ENCODE measurements at regions of chr11 and their contacts with region 1.

Region 1: GRCh38 chr11:3807909-3808860 is at the start of gene PGAP2:
- DNase-seq: no peak
- H3K4me3 ChIP-seq: peak within 1 kb of the TSS; percentile 81
- H3K27ac ChIP-seq: no peak within 1 kb of the TSS
- H3K27me3 ChIP-seq: no peaks in the 10 kb centered on the region
- CTCF ChIP-seq: peak; percentile 82
- polyA plus RNA-seq, gene PGAP2: 20.8 and 26.3 TPM in 2 replicates

Region 2: DNA sequence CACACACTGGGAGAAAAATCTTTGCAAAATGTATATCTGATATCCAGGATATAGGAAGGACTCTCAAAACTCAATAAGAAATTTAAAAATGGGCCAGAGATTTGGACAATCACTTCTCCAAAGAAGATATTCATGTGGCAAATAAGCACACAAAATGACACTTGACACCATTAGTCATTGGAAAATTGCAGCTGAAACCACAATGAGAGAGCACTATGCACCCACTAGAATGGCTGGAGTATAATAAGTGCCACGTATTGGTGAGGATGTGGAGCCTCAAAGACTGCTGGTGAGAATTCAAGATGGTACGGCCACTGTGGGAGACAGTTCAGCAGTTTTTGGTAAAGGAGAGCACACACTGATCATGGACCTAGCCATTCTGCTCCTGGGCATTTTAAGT is 630.3 kb before region 1 on chr11:
- CTCF ChIA-PET with region 1: no interaction called
- POLR2A ChIA-PET with region 1: no interaction called
- DNase-seq: no peak
- H3K4me3 ChIP-seq: no peak overlapping the region
- H3K27ac ChIP-seq: no peak overlapping the region
- H3K27me3 ChIP-seq: peaks cover 7% of the 10 kb centered on the region
- CTCF ChIP-seq: no peak

Region 3: DNA sequence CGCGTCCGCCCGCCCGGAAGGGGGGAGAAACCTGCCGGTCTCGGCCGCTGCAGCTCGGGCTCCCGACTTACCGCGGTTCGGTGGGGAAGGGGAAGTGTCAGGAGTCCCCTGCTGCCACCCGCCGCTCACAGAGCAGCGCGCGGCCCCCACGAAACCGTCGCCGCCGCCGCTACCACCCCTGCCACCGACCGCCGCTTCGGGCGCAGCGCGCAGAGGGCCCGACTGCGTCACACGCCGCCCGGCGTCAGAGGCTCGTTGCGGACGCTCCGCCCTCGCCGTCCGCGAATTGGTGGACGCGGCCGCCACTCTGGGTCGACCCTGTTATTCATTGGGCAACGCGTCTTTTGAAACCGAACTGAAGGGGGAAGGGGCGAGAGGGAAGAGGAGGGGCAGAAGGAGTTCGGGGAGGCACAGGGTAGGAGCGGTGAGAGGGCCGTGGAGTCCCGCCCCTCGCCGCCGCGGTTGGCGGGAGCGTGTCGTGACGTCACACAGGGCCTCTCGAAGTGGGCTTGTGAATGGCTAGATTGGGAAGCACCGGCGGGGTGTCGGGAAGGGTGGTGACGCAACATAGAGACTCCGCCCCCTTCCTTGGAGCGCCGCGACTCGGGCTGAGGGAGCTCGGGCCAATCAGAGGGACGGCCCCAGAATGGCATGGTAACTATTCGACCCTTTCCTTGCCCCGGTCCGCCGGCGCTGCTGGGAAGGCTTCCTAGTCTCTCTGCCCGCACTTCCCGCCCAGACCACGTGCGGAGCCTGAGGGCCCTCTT is 10.7 kb before region 1 on chr11 and contains the start of gene NUP98:
- CTCF ChIA-PET with region 1: interaction called, 15 read pairs
- POLR2A ChIA-PET with region 1: interaction called, 4 read pairs
- DNase-seq: peak; percentile 100
- H3K4me3 ChIP-seq: peak within 1 kb of the TSS; percentile 98
- H3K27ac ChIP-seq: peak within 1 kb of the TSS; percentile 93
- H3K27me3 ChIP-seq: no peaks in the 10 kb centered on the region
- CTCF ChIP-seq: no peak
- polyA plus RNA-seq, gene NUP98: 90.7 and 101 TPM in 2 replicates

Region 4: GRCh38 chr11:3824714-3825472 is 16.7 kb after region 1 on chr11:
- CTCF ChIA-PET with region 1: interaction called, 11 read pairs
- POLR2A ChIA-PET with region 1: interaction called, 4 read pairs
- DNase-seq: no peak
- H3K4me3 ChIP-seq: no peak overlapping the region
- H3K27ac ChIP-seq: peak overlapping the region; percentile 11
- H3K27me3 ChIP-seq: no peaks in the 10 kb centered on the region
- CTCF ChIP-seq: peak; percentile 53

Region 5: DNA sequence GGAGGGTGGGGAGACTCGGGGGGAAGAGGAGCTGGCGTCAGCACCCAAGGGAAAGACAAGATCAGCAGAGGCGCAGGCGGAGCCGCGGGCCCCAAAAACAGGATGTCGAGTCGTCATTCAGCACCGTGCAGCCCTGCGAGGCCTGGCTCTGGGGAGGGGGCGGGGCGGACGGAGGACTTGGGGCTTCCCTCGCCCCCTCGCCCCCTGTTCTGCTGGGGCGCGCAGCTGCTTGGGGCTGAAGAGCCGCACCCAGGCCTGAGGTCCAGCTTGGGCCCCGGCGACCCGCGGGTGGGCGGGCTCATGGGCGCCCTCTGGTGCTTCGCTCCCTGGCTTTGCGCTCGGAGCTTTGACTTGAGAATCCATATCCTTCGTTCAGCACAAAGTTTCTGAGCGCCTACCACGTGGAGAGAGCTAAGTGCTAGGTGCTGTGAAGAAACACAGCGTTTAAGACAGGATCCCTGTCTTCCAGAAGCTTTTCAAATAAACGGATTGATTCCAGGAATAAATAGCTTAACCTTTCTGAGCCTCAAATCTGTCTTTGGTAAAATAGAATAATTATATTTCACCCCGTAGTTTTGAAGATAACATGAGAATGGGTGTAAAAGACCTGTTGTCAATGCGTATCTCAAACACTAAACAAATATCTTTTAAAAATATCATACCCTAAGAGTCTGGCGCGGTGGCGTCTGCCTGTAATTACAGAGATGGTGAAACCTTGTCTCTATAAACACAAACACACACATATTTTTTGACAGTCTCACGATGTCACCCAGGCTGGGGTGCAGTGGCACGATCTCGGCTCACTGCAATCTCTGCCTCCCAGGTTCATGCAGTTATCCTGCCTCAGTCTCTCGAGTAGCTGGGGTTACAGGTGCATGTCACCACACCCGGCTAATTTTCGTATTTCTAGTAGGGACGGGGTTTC is 33.5 kb after region 1 on chr11:
- CTCF ChIA-PET with region 1: interaction called, 17 read pairs
- POLR2A ChIA-PET with region 1: interaction called, 4 read pairs
- DNase-seq: peak; percentile 38
- H3K4me3 ChIP-seq: peak overlapping the region; percentile 72
- H3K27ac ChIP-seq: peak overlapping the region; percentile 89
- H3K27me3 ChIP-seq: no peaks in the 10 kb centered on the region
- CTCF ChIP-seq: peak; percentile 84